Astrocyte of the cerebellum (primary cell): ENCODE measurements at regions of chr1 and their contacts with region 1.

Region 1: GRCh38 chr1:8409106-8409505 is 91.2 kb downstream of the SLC45A1 start:
- DNase-seq: peak; percentile 53
- H3K4me3 ChIP-seq: no peak overlapping the region
- CTCF ChIP-seq: peak; percentile 64

Region 2: GRCh38 chr1:8351693-8352470 is 57.2 kb before region 1 on chr1:
- in situ Hi-C with region 1: loop called (anchors 5 kb)
- DNase-seq: no peak
- H3K4me3 ChIP-seq: no peak overlapping the region
- CTCF ChIP-seq: peak; percentile 84

Region 3: DNA sequence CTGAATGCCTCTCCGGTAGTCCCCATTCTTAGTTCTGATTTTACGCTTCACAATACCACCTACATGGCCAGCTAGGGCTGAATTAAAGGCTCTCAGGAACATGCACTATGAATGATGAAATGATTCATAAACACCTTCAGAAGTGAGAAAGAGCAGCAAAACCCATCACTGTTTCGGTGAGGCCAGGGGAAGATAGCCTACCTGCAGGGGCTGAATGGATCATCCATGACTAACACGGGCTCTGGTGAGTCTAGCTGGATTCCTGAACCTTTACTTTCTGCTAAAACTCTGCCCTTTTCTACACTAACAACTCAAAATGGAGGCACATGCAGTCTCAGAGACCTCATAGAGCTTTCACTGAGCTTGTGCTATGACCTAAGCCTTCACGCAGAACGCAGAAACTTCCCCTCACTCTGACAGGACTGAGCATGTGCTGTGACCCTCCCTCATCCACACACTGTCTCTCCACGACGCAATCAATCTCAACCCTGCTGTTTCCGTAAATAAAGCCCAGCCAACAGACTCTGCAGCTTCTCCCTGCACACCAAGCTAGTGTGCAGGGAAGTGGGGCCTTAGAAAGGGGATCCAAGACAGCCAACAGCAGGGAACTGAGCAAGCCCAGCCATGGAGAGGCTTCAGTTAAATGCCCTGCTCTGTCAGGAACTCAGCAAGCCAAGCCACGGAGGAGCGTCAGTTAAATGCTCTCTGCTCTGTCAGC is 116.6 kb after region 1 on chr1:
- in situ Hi-C with region 1: no loop called
- DNase-seq: peak; percentile 84
- H3K4me3 ChIP-seq: peak overlapping the region; percentile 51
- CTCF ChIP-seq: no peak